ENCODE measurements at regions of chr3 and their contacts with region 1.

Region 1: DNA sequence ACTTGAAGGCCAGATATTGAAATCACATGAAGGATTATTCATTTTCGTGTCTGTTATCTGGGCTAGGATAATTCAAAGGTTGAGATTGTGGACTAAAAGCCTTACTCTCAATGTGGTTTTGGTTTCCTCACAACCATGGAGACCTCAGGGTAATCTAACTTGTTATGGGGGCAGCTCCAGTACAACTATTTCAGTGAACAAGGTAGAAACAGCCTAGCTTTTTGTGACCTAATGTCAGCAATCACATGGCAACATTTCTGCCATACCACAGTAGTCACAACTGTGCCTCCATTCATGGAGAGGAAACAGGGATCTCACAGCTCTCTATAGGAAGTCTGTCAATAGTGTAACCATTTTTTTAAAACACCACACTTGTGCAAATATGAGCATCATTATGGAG is 62.4 kb upstream of the RARB start:
- DNase-seq: no peak
- H3K4me3 ChIP-seq: no peak overlapping the region
- H3K4me3 Mint-ChIP-seq: no peak overlapping the region
- H3K27ac Mint-ChIP-seq: no peak overlapping the region
- H3K4me1 ChIP-seq: peaks cover 10% of the 10 kb centered on the region
- H3K4me1 Mint-ChIP-seq: peaks cover 6% of the 10 kb centered on the region
- H3K27me3 ChIP-seq: no peaks in the 10 kb centered on the region
- H3K27me3 Mint-ChIP-seq: no peaks in the 10 kb centered on the region
- CTCF ChIP-seq: no peak

Region 2: GRCh38 chr3:25297667-25298585 is 67.7 kb before region 1 on chr3:
- CTCF ChIA-PET with region 1: no interaction called
- POLR2A ChIA-PET with region 1: no interaction called
- intact Hi-C with region 1: loop called (anchors 10 kb)
- DNase-seq: no peak
- H3K4me3 ChIP-seq: no peak overlapping the region
- H3K4me3 Mint-ChIP-seq: no peak overlapping the region
- H3K27ac Mint-ChIP-seq: no peak overlapping the region
- H3K4me1 ChIP-seq: no peaks in the 10 kb centered on the region
- H3K4me1 Mint-ChIP-seq: peaks cover 6% of the 10 kb centered on the region
- H3K27me3 ChIP-seq: no peaks in the 10 kb centered on the region
- H3K27me3 Mint-ChIP-seq: no peaks in the 10 kb centered on the region
- CTCF ChIP-seq: no peak

Region 3: DNA sequence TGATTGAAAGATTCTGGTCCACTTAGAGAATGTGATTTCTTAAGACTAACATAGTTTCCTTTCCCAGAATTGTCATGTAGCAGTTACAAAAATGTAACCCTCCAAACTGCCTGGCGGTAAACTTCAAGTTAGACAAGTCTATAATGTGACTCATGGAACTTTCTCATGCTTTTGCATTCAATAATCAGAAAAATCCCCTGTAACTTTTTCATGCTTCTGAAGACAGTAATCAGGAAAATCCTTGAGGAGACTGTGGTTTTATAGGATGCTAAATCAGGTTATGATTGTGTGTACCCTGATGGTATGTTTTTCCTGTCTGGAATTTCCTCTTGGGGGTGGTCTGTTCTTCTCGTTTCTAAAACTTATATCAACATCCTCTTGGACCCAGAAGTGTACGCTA is 11.6 kb before region 1 on chr3:
- CTCF ChIA-PET with region 1: no interaction called
- POLR2A ChIA-PET with region 1: no interaction called
- intact Hi-C with region 1: no loop called
- DNase-seq: no peak
- H3K4me3 ChIP-seq: no peak overlapping the region
- H3K4me3 Mint-ChIP-seq: no peak overlapping the region
- H3K27ac Mint-ChIP-seq: no peak overlapping the region
- H3K4me1 ChIP-seq: no peaks in the 10 kb centered on the region
- H3K4me1 Mint-ChIP-seq: no peaks in the 10 kb centered on the region
- H3K27me3 ChIP-seq: no peaks in the 10 kb centered on the region
- H3K27me3 Mint-ChIP-seq: no peaks in the 10 kb centered on the region
- CTCF ChIP-seq: no peak

Measured in Caco-2 (cell line).